Activated B cell treated with CpG ODN at 0.5 μM for 24 hours (primary cell): ENCODE measurements at regions of chr14 and their contacts with region 1.

Region 1: DNA sequence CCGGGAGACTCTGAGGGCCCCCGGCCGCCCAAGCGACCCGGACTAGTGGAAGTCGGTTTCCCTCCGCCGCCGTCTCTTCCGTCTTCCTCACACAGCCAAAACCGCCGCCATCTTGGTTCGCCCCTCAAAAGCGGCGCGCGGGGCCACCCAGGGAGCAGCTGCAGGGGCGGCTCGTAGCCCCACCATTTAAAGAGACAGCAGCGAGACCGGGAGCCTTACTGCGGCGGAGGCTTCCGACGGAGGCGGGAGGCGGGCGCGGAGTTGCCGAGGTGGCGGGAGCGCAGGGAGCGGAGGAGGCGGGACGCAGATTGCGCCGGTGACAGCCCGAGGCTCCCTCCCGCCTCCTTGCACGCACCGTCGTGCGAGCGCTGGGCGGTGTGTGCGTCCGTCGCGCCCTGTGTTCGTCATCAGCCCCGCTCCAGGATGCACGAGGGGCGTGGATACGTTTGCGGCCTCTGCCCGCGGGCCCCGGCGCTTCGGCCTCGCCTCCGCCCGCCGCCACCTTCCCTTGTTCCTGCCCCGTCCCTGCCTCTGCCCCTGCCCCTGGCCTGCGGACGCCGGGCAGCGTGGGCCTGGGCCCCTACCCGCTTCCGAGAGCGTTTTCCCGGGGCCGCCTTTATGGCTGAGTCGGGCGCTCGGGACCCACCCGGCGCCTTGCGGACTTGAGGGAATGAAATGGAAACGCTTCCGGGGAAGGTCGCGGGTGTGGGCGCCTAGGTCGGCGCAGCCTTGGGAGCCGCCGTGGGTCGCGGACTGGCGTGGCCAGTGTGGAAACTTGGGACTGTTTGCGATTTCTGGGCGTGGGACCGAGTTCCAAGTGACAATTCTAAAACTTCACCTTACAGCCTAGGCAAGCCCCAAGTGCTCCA is at the start of gene PPP4R3A:
- DNase-seq: peak; percentile 91
- ATAC-seq: peak; percentile 85
- H3K4me3 Mint-ChIP-seq: peak within 1 kb of the TSS; percentile 99
- H3K27ac Mint-ChIP-seq: peak within 1 kb of the TSS; percentile 100
- H3K4me1 Mint-ChIP-seq: peaks cover 32% of the 10 kb centered on the region
- H3K27me3 Mint-ChIP-seq: peaks cover 2% of the 10 kb centered on the region
- CTCF ChIP-seq: no peak
- total RNA-seq, gene PPP4R3A: 138 and 141 TPM in 2 replicates

Region 2: DNA sequence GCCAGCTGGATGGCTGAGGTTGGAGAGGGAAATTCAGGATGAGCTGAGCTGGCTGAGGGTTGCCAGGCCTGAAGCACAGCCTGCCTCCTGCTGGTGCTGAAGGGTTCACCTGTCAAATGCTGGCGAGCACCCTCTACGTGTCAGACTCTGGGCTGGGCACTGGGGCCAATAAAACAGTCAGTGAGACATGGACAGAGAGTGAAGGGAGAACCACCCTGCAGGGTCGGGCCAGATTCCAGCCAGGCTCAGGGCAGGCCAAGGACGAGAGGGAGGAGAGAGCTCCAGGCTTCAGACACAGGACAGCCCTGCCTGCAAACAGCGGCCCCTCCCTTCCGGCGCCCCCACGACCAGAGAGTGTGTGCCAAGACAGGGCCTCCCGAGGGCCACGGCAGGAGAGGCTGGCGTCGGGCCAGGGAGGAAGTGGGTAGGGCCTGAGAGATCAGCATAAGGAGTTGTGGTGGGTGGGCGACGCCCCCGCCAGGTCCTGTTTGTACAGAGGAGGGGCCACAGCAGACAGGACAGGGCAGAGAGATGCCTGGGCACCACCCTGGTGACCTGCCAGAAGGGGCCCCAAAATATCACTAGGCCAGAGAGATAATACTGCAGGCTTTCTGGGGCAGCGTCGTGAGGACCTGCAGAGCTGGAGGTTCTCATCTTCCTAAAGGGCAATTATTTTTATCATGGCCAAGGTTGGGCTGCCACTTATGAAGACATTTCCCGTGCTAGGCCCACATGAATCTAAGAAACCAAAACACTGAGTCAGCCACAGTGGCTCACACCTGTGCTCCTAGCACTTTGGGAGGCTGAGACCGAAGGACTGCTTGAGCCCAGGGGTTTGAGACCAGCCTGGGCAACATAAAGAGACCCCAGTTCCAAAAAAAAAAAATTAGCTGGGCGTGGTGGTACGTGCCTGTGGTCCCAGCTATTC is 192.8 kb before region 1 on chr14:
- CTCF ChIA-PET with region 1: no interaction called
- POLR2A ChIA-PET with region 1: interaction called, 11 read pairs
- intact Hi-C with region 1: loop called (anchors 1 kb)
- DNase-seq: peak; percentile 62
- ATAC-seq: peak; percentile 32
- H3K4me3 Mint-ChIP-seq: peak overlapping the region; percentile 70
- H3K27ac Mint-ChIP-seq: peak overlapping the region; percentile 98
- H3K4me1 Mint-ChIP-seq: peaks cover 78% of the 10 kb centered on the region
- H3K27me3 Mint-ChIP-seq: no peaks in the 10 kb centered on the region
- CTCF ChIP-seq: no peak

Region 3: DNA sequence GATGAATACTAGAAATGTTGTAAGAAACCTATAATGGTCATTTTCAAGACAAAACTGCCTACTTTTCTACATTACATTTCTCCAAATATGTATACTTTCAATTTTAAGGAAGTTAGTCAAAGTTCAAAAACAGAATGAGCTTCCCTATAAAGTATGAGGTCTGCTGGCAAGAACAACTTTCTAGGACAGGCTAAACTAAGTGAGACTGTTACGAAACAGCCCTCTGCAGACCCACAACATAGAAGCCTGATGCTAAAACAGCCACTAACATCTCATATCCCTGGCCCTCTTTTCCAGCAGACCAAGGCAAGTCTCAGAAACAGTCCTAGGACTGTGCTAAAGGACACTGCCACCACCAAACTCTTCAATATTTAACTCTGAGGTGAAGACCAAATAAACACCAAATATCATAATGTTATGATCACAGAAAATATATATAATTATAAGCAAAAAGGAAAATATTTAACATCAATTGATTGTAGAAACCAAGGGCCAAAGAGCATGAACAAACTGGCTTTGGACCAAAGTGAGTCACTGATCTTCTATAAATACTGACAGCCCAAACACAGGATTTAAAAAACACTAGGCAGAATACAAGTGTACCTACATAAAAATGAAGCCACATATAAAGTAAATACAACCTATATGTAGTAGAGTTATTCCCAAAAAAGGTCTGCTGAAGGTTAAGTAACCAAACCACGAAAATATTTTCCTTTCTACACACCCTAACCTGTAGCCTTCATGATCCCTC is 28.0 kb before region 1 on chr14:
- CTCF ChIA-PET with region 1: interaction called, 3 read pairs
- POLR2A ChIA-PET with region 1: interaction called, 20 read pairs
- intact Hi-C with region 1: loop called (anchors 1 kb)
- DNase-seq: no peak
- ATAC-seq: no peak
- H3K4me3 Mint-ChIP-seq: no peak overlapping the region
- H3K27ac Mint-ChIP-seq: no peak overlapping the region
- H3K4me1 Mint-ChIP-seq: peaks cover 71% of the 10 kb centered on the region
- H3K27me3 Mint-ChIP-seq: no peaks in the 10 kb centered on the region
- CTCF ChIP-seq: no peak

Region 4: GRCh38 chr14:91836119-91836881 is 325.9 kb after region 1 on chr14:
- CTCF ChIA-PET with region 1: no interaction called
- POLR2A ChIA-PET with region 1: no interaction called
- intact Hi-C with region 1: loop called (anchors 5 kb)
- DNase-seq: peak; percentile 68
- ATAC-seq: peak; percentile 94
- H3K4me3 Mint-ChIP-seq: peak overlapping the region; percentile 89
- H3K27ac Mint-ChIP-seq: peak overlapping the region; percentile 78
- H3K4me1 Mint-ChIP-seq: peaks cover 53% of the 10 kb centered on the region
- H3K27me3 Mint-ChIP-seq: peaks cover 5% of the 10 kb centered on the region
- CTCF ChIP-seq: no peak

Region 5: GRCh38 chr14:92106143-92106926 is 595.9 kb after region 1 on chr14 and contains the start of gene ATXN3:
- CTCF ChIA-PET with region 1: no interaction called
- POLR2A ChIA-PET with region 1: no interaction called
- intact Hi-C with region 1: loop called (anchors 5 kb)
- DNase-seq: peak; percentile 81
- ATAC-seq: peak; percentile 91
- H3K4me3 Mint-ChIP-seq: peak within 1 kb of the TSS; percentile 100
- H3K27ac Mint-ChIP-seq: peak within 1 kb of the TSS; percentile 92
- H3K4me1 Mint-ChIP-seq: peaks cover 46% of the 10 kb centered on the region
- H3K27me3 Mint-ChIP-seq: no peaks in the 10 kb centered on the region
- CTCF ChIP-seq: no peak
- total RNA-seq, gene ATXN3: 23.8 and 29.3 TPM in 2 replicates